ENCODE measurements at regions of chr7 and their contacts with region 1.

Region 1: DNA sequence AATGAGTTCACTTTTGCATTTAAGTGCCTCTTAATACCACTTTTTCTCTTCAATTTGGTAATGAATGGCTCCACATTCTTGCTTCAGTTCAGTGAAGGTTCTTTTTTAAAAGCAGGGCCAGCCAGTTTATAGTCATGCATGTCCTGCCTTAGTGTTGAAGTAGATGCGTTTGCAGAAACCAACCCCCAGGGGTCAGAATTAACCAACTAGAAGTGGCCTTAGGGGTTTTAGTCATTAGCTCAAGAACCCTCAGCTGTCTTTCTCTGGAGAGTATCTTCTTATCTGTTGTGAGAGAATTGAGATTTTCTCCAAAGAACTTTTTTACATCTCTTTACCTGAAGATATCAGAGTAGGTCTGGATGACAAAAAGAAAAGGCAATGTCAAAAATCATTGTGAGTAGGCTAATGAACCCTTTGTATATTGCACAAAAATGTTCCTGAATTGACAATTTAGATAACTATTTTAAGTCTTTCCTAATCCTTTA is 82.2 kb downstream of the PIK3CG start:
- DNase-seq: peak; percentile 38
- H3K4me3 ChIP-seq: no peak overlapping the region
- CTCF ChIP-seq: peak; percentile 61

Region 2: GRCh38 chr7:106793015-106793975 is 154.0 kb before region 1 on chr7:
- CTCF ChIA-PET with region 1: interaction called, 14 read pairs
- POLR2A ChIA-PET with region 1: no interaction called
- DNase-seq: no peak
- H3K4me3 ChIP-seq: no peak overlapping the region
- CTCF ChIP-seq: peak; percentile 20

Region 3: DNA sequence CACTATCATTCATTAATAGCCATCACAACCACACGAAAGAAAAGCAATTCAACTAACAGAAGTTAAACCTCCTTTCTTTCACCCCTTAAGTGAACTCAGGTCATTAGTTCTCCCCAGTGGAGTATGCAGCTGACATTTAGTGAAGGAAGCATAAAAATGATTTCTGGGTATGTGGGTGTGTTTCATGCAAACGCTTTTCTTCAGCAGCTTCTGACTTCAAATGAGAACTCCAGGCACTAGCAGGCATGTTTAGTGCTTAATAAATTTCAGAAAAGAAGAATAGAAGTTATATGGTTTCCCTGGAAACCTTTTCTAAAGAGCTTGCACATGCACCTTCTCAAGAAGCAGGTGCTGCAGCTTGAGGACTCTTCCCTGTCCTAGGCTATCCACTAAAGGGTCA is 19.8 kb before region 1 on chr7:
- CTCF ChIA-PET with region 1: interaction called, 11 read pairs
- POLR2A ChIA-PET with region 1: no interaction called
- DNase-seq: no peak
- H3K4me3 ChIP-seq: no peak overlapping the region
- CTCF ChIP-seq: no peak

Region 4: DNA sequence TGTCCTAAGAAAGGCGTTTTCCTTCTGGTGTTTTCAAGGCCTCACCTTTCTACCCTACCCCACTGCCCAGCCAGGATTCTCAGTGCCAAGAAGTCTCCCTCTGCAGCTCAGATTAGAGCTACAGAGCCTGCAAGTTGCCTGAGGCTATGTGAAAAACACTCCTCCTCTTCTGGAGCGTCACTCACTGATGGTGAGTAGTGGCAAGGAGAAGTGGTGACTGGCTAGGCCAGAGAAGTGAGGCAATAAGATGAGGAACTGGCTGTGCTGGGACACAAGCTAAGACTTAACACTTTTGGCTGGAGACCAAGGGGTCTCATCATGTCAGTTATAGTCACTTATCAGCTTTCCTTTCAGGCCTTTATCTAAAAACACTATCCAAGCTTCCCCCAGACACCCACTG is 10.5 kb after region 1 on chr7:
- CTCF ChIA-PET with region 1: interaction called, 19 read pairs
- POLR2A ChIA-PET with region 1: no interaction called
- DNase-seq: no peak
- H3K4me3 ChIP-seq: no peak overlapping the region
- CTCF ChIP-seq: no peak

Region 5: GRCh38 chr7:107069457-107069856 is 122.2 kb after region 1 on chr7:
- CTCF ChIA-PET with region 1: no interaction called
- POLR2A ChIA-PET with region 1: no interaction called
- DNase-seq: no peak
- H3K4me3 ChIP-seq: no peak overlapping the region
- CTCF ChIP-seq: no peak

Region 6: DNA sequence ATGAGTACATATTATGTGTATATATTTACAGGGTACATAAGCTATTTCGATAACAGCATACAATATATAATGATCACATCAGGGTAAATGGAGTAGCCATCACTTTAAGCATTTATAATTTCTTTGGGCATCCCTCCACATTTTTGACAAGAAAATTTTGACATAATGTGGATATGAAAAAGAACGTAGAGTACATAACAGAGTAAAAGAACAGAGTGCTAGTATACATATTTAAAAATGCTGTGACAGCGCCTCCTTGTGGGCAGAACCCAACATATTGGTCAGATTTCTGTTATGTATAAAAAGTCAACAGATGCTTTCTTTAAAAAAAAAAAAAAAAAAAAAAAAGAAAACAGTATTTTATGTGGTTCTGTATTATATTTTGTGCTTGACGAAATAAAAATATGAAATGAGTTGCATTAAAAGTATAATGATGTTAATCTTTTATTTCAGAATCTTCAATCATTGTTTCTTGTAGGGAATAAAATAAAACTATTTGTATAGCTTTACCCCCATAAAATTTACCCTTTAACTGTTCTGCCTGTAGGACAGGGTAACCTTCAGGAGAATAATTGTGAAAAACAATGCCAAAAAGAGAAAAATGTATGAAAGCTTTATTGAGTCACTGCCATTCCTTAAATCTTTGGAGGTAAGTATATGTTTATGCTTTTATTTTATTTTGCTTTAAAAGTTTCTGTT is 203.2 kb after region 1 on chr7:
- CTCF ChIA-PET with region 1: interaction called, 340 read pairs
- POLR2A ChIA-PET with region 1: no interaction called
- DNase-seq: no peak
- H3K4me3 ChIP-seq: no peak overlapping the region
- CTCF ChIP-seq: peak; percentile 41